Activated CD4-positive, alpha-beta T cell treated with anti-CD3 and anti-CD28 coated beads, Interleukin-2, amount 10 ng/mL, durations not matched to agents 24 days and 14 days (primary cell): ENCODE measurements at regions of chr12 and their contacts with region 1.

Region 1: GRCh38 chr12:102095675-102096263 is 24.1 kb downstream of the NUP37 start:
- DNase-seq: no peak
- H3K4me3 Mint-ChIP-seq: no peak overlapping the region
- H3K27ac Mint-ChIP-seq: no peak overlapping the region
- H3K4me1 Mint-ChIP-seq: peaks cover 12% of the 10 kb centered on the region
- H3K27me3 Mint-ChIP-seq: no peaks in the 10 kb centered on the region

Region 2: DNA sequence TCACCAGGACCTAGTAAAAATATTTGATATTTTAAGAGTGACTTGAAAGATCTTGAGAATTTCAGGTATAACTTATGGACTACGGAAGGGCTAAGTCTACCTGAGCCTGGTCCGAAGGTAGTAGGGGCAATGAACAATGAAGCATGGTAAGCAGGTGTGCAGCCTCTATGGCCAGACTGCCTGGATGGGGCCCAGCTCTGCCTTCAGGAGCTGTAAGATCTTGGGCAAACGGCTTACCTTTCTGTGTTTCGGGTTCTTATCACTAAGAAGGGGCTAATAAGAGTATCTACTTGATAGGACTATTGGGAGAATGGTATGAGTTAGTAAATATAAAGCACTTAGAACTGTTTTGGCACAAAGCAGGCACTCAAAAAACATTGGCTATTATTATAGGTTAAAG is 14.9 kb before region 1 on chr12:
- intact Hi-C with region 1: no loop called
- DNase-seq: no peak
- H3K4me3 Mint-ChIP-seq: no peak overlapping the region
- H3K27ac Mint-ChIP-seq: no peak overlapping the region
- H3K4me1 Mint-ChIP-seq: peaks cover 1% of the 10 kb centered on the region
- H3K27me3 Mint-ChIP-seq: no peaks in the 10 kb centered on the region

Region 3: DNA sequence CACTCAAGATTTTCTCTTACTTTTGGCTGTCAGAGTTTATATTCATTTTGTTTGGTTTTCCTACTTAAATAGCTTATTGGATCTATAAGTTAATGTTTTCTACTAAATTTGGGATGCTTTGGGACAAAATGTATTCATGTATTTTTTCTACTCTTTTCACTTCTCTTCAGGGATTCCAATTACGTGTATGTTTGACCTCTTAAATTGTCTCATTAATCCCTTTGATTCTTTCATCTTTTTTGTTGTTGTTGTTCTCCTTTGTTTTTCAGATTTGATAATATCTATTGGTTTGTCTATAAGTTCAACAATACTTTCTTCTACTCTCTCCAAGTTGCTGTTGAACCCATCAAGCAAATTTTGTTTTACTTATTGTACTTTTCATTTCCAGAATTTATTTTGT is 67.6 kb after region 1 on chr12:
- intact Hi-C with region 1: no loop called
- DNase-seq: no peak
- H3K4me3 Mint-ChIP-seq: no peak overlapping the region
- H3K27ac Mint-ChIP-seq: no peak overlapping the region
- H3K4me1 Mint-ChIP-seq: peaks cover 11% of the 10 kb centered on the region
- H3K27me3 Mint-ChIP-seq: no peaks in the 10 kb centered on the region

Region 4: DNA sequence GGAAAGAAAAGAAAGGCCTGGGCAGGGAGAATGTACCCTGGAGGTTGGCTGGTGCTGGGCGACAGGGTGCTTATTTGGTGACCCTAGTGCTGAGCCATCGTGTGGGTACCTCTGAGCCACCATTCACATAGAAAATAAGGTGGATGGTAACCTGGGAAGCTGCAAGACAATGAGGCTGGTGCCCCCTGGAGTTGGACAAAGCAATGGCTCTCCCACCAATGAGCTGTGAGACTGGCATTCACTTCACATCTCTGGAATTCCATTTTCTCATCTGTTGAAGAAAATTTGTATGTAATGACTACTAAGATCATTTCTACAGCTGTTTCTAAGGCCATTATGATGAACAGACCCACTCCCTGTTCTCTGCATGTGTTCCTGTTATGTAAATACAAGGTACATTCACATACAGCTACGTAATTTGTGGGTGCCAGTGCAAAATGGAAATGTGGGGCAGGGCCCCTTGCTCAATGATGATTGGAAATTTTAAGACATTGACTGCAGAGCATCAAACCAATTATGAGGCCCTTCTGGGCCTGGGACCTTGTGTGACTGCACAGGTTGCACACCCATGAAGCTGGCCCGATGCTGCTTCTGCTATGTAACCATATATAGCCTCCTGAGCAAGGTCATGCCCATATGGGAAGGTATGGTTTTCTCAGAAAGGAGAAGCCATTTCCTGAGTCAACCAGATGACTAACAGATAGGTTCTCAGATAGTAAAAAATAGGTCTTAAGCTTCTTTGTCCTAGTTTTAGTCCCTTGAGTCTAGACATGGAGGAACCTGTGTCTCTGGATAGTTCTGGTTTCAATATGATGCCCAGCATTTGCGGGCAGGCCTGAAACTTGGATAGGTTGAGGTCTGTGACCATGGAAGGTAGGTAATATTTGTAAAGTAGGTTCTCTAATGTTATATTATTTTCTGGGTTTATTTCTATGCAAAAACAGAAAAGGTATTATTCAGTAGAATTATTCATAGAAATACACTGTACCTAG is 448.0 kb after region 1 on chr12:
- intact Hi-C with region 1: loop called (anchors 10 kb)
- DNase-seq: no peak
- H3K4me3 Mint-ChIP-seq: no peak overlapping the region
- H3K27ac Mint-ChIP-seq: no peak overlapping the region
- H3K4me1 Mint-ChIP-seq: no peaks in the 10 kb centered on the region
- H3K27me3 Mint-ChIP-seq: peaks cover 3% of the 10 kb centered on the region

Region 5: GRCh38 chr12:102702447-102703114 is 606.8 kb after region 1 on chr12:
- intact Hi-C with region 1: loop called (anchors 1 kb)
- DNase-seq: peak; percentile 78
- H3K4me3 Mint-ChIP-seq: no peak overlapping the region
- H3K27ac Mint-ChIP-seq: no peak overlapping the region
- H3K4me1 Mint-ChIP-seq: no peaks in the 10 kb centered on the region
- H3K27me3 Mint-ChIP-seq: peaks cover 22% of the 10 kb centered on the region

Region 6: GRCh38 chr12:102769319-102769916 is 673.6 kb after region 1 on chr12:
- intact Hi-C with region 1: loop called (anchors 5 kb)
- DNase-seq: peak; percentile 81
- H3K4me3 Mint-ChIP-seq: no peak overlapping the region
- H3K27ac Mint-ChIP-seq: no peak overlapping the region
- H3K4me1 Mint-ChIP-seq: no peaks in the 10 kb centered on the region
- H3K27me3 Mint-ChIP-seq: peaks cover 12% of the 10 kb centered on the region